H1 (cell line): ENCODE measurements at regions of chr14 and their contacts with region 1.

Region 1: DNA sequence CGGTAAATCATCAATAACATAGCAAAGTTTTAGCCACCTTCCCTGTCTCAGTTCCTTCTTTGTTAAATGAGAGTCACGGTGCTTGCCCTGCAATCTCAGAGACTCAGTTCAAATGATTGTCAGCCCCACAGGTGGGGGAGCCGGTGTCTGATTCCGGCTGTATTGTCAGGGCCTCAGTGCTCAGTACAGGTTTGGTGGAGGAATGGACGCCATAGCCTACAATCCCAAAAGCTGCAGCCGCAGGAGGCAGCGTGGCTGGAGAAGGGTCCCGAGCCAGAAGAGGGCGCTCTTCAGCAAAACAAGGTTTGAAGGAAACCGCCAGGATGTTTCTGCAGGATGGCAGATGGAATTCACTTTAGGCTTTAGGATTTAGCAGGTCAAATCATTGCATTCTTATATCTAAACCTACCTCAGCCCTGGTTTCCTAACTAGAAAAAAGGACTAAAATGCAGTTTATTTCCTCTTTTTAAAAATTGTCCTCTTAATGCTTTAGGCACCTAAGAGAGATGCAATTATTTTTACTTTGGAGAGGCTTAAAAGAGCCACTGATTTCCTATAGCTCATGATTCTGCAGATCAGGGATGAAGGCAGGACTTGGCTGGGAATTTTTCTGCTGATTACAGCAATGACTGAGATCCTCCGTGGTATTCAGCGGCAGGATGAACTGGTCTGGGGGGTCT is 29.2 kb downstream of the FOS start:
- DNase-seq: peak; percentile 75 to 96
- H3K4me3 ChIP-seq: no peak overlapping the region
- H3K27ac ChIP-seq: no peak overlapping the region
- H3K4me1 ChIP-seq: peaks cover 0 to 6% (median 5%) of the 10 kb centered on the region in 4 experiments; a peak in 5 of 7 replicates
- H3K27me3 ChIP-seq: no peaks in the 10 kb centered on the region
- CTCF ChIP-seq: peak; percentile 87 to 97 (median 95)
- EP300 ChIP-seq: no peak
- POLR2A ChIP-seq: no peak
- RAD21 ChIP-seq: peak; percentile 96

Region 2: DNA sequence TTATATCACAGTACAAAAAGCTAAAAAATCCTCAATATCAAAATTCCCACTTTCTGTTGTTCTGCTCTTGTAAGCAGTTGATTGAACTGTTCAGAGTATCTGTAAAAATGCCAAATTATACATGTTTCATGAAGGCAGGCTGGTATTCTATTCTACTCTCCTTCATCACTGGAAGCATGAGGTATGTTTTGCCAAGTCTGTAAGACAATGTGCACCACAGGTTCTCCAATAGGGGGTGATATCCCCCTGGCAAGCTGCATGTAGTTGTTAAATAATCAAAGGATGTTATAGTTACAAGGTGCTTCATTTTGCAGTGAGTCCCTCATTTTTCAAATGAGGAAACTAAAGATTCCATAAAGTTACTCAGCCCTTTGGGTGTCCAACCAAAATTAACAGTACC is 165.9 kb before region 1 on chr14:
- CTCF ChIA-PET with region 1: interaction called, 105 read pairs
- POLR2A ChIA-PET with region 1: no interaction called
- DNase-seq: no peak
- H3K4me3 ChIP-seq: no peak overlapping the region
- H3K27ac ChIP-seq: no peak overlapping the region
- H3K4me1 ChIP-seq: no peaks in the 10 kb centered on the region
- H3K27me3 ChIP-seq: no peaks in the 10 kb centered on the region
- CTCF ChIP-seq: peak in 2 of 3 experiments; percentile 44 to 58; a peak in 2 of 4 replicates
- EP300 ChIP-seq: no peak
- POLR2A ChIP-seq: no peak
- RAD21 ChIP-seq: peak; percentile 70 to 72

Region 3: GRCh38 chr14:75452900-75453747 is 145.3 kb after region 1 on chr14:
- CTCF ChIA-PET with region 1: interaction called, 44 read pairs
- POLR2A ChIA-PET with region 1: interaction called, 3 read pairs
- DNase-seq: peak; percentile 82 to 92
- H3K4me3 ChIP-seq: peak overlapping the region in 1 of 4 experiments; percentile 29; a peak in 1 of 8 replicates
- H3K27ac ChIP-seq: peak overlapping the region; percentile 87
- H3K4me1 ChIP-seq: peaks cover 17 to 32% (median 28%) of the 10 kb centered on the region in 4 experiments
- H3K27me3 ChIP-seq: no peaks in the 10 kb centered on the region
- CTCF ChIP-seq: no peak; a peak in 1 of 4 replicates
- EP300 ChIP-seq: peak in 1 of 2 experiments; percentile 93; a peak in 2 of 3 replicates
- POLR2A ChIP-seq: peak in 1 of 2 experiments; percentile 53; a peak in 2 of 3 replicates
- RAD21 ChIP-seq: no peak; a peak in 1 of 4 replicates

Region 4: GRCh38 chr14:75476274-75476995 is 168.6 kb after region 1 on chr14:
- CTCF ChIA-PET with region 1: interaction called, 36 read pairs
- POLR2A ChIA-PET with region 1: interaction called, 3 read pairs
- DNase-seq: no peak
- H3K4me3 ChIP-seq: no peak overlapping the region
- H3K27ac ChIP-seq: no peak overlapping the region
- H3K4me1 ChIP-seq: peaks cover 5 to 15% (median 7%) of the 10 kb centered on the region in 4 experiments
- H3K27me3 ChIP-seq: 0 out of 7 replicates have a peak, but pooled peaks cover 0 to 2% (median 0%) of the 10 kb centered on the region in 4 experiments
- CTCF ChIP-seq: peak in 2 of 3 experiments; percentile 0 to 6; a peak in 2 of 4 replicates
- EP300 ChIP-seq: no peak
- POLR2A ChIP-seq: no peak
- RAD21 ChIP-seq: peak; percentile 3 to 7; a peak in 1 of 4 replicates

Region 5: GRCh38 chr14:75560962-75561432 is 253.2 kb after region 1 on chr14:
- CTCF ChIA-PET with region 1: interaction called, 43 read pairs
- POLR2A ChIA-PET with region 1: no interaction called
- DNase-seq: peak; percentile 79 to 88
- H3K4me3 ChIP-seq: no peak overlapping the region
- H3K27ac ChIP-seq: no peak overlapping the region
- H3K4me1 ChIP-seq: peaks cover 0 to 4% (median 2%) of the 10 kb centered on the region in 4 experiments; a peak in 3 of 7 replicates
- H3K27me3 ChIP-seq: no peaks in the 10 kb centered on the region
- CTCF ChIP-seq: peak; percentile 87 to 97 (median 90)
- EP300 ChIP-seq: peak in 1 of 2 experiments; percentile 67; a peak in 1 of 3 replicates
- POLR2A ChIP-seq: no peak
- RAD21 ChIP-seq: peak; percentile 90 to 93